PC-9 (cell line): ENCODE measurements at regions of chr15 and their contacts with region 1.

Region 1: GRCh38 chr15:62506217-62506805 is 341.2 kb upstream of the C2CD4B start:
- DNase-seq: peak in 1 of 2 experiments; percentile 62
- H3K4me3 ChIP-seq: no peak overlapping the region
- H3K27ac ChIP-seq: 0 out of 2 replicates have a peak overlapping the region, but pooled peaks have one; percentile 27
- H3K4me1 ChIP-seq: peaks cover 15% of the 10 kb centered on the region
- H3K27me3 ChIP-seq: no peaks in the 10 kb centered on the region
- CTCF ChIP-seq: no peak

Region 2: DNA sequence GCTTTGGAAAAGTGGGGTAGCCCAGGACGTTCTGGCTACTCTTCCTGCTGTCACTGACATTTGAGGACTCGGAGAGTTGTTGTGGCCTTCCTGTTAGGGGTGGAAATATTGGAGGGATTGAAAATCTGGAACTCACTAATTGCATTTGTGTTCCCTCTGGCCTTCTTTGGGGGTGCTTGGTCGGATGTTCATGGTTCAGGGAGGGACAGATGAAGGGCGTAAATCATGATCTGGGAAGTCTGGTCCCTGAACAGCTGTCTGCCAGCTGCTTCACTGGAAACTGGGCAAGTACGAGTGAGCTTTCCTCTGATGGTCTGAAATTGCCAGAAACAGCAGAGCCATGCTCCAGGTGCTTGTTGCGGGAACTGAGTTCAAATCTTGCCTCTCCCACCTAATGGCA is 13.4 kb before region 1 on chr15:
- CTCF ChIA-PET with region 1: interaction called, 3 read pairs
- POLR2A ChIA-PET with region 1: interaction called, 11 read pairs
- intact Hi-C with region 1: no loop called
- DNase-seq: no peak
- H3K4me3 ChIP-seq: no peak overlapping the region
- H3K27ac ChIP-seq: no peak overlapping the region
- H3K4me1 ChIP-seq: no peaks in the 10 kb centered on the region
- H3K27me3 ChIP-seq: no peaks in the 10 kb centered on the region
- CTCF ChIP-seq: no peak